Activated CD4-positive, alpha-beta memory T cell treated with anti-CD3 and anti-CD28 coated beads, Interleukin-2, amount 10 ng/mL, durations not matched to agents 7 days and 5 days (primary cell): ENCODE measurements at regions of chr1 and their contacts with region 1.

Region 1: DNA sequence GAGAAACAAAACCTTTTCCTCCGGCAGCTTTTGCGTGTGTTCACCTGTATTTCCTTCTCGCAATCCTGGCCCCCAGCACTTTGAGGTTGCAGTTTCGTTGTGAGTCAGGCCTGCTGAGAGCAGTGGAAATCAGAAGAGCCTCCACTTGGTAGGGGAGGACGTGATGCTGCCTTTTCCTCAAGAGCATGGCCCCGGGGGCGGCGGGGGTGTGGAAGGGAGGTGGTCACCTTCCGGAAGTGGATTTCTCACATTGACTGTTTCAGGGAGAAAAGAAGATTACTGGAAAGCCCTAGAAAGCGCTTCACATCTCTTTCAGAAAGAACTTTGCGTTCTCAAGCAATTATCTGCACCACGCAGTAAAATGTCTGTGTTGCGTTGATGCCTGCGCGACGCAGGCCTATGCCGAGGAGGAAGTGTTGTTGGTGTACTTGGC is 12.2 kb upstream of the IL10 start:
- DNase-seq: peak; percentile 94
- H3K4me3 Mint-ChIP-seq: peak overlapping the region; percentile 53
- H3K27ac Mint-ChIP-seq: peak overlapping the region; percentile 90
- H3K4me1 Mint-ChIP-seq: peaks cover 64% of the 10 kb centered on the region
- H3K27me3 Mint-ChIP-seq: peaks cover 22% of the 10 kb centered on the region

Region 2: GRCh38 chr1:206766251-206766856 is 18.1 kb before region 1 on chr1:
- CTCF ChIA-PET with region 1: interaction called, 42 read pairs
- POLR2A ChIA-PET with region 1: interaction called, 114 read pairs
- DNase-seq: peak; percentile 85
- H3K4me3 Mint-ChIP-seq: peak overlapping the region; percentile 21
- H3K27ac Mint-ChIP-seq: peak overlapping the region; percentile 66
- H3K4me1 Mint-ChIP-seq: peaks cover 75% of the 10 kb centered on the region
- H3K27me3 Mint-ChIP-seq: peaks cover 19% of the 10 kb centered on the region

Region 3: GRCh38 chr1:206774093-206774492 is 10.4 kb before region 1 on chr1:
- CTCF ChIA-PET with region 1: interaction called, 42 read pairs
- POLR2A ChIA-PET with region 1: interaction called, 114 read pairs
- DNase-seq: no peak
- H3K4me3 Mint-ChIP-seq: no peak overlapping the region
- H3K27ac Mint-ChIP-seq: no peak overlapping the region
- H3K4me1 Mint-ChIP-seq: peaks cover 53% of the 10 kb centered on the region
- H3K27me3 Mint-ChIP-seq: peaks cover 41% of the 10 kb centered on the region

Region 4: DNA sequence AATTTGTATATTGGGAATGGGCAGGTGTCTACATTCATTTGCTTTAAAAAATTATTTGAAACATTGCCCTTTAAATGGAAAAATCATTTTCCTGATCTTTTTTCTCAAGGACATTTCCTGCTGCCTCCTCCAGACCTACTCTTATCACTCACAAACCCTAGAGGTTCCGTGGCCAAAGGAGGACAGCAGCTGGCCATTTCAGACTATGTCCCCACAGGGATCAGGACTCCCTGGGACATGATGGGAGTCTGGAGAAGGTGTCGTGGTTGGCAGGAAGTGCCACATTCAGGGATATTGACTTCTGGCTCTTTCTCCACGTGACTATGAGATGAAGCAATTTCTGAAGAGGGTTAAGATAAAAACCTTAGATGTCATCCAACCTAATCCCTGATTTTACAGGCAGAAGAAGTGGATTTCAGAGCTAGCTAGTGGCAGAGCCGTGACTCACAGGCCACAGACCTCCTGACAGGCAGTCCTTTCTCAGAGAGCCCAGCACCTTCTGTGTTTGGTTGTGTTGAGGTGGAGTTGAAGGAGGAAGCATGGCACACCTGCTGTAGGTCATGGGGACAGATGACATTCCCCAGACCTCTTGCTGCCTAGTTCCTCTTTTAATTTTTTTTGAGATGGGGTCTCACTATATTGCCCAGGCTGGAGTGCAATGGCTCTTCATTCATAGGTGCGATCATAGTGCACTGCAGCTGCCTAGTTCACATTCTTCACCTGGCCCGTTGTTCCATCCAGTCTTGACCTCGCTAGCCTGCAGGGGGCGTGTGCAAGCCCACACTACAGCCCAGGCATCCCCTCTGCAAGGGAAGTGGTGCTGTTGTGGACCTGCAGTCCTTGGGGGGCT is 13.3 kb after region 1 on chr1:
- CTCF ChIA-PET with region 1: interaction called, 11 read pairs
- POLR2A ChIA-PET with region 1: interaction called, 34 read pairs
- DNase-seq: peak; percentile 45
- H3K4me3 Mint-ChIP-seq: no peak overlapping the region
- H3K27ac Mint-ChIP-seq: no peak overlapping the region
- H3K4me1 Mint-ChIP-seq: peaks cover 64% of the 10 kb centered on the region
- H3K27me3 Mint-ChIP-seq: peaks cover 38% of the 10 kb centered on the region